Natural killer cell (primary cell): ENCODE measurements at regions of chr3 and their contacts with region 1.

Region 1: DNA sequence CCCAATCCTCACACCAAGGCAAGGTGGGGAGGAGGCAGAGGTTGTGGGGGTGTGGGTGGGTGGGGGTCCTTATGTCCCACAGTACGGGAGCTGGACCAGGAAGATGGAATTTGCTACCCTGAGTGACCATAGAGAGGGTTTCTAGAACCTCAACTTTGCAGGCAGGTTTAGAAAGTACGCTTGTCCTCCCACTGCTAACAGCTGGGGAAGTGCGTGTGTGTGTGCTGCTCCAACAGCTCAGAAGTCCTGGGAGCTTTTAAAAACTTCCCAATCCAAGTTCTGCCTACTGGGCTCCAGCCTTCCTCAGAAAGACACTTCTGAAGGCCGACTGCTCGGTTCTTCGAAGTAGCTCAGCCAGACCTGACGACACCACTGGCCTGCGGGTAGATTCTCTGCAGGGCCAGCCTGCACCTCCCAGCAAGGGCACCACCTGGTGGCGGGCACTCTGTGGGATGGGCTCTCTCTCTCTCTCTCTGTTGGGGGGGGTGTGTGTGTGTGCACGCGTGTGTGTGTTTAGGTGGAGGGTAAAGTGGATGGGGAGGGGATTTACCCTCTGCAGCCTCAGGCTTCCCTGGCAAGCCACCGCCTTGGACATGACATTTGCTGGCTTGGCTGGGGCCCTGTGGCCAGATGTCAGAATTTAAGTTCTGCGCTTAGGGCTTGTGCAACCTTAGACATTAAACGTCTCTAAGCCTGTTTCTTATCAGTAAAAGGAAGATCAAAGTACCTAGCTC is 15.6 kb downstream of the TMEM158 start:
- DNase-seq: peak; percentile 69 to 88
- ATAC-seq: peak; percentile 86 to 99 (median 98)
- H3K4me3 ChIP-seq: no peak overlapping the region
- H3K4me3 Mint-ChIP-seq: no peak overlapping the region
- H3K27ac ChIP-seq: no peak overlapping the region
- H3K27ac Mint-ChIP-seq: no peak overlapping the region
- H3K4me1 ChIP-seq: peaks cover 3% of the 10 kb centered on the region
- H3K4me1 Mint-ChIP-seq: peaks cover 6% of the 10 kb centered on the region in 2 donors
- H3K27me3 ChIP-seq: no peaks in the 10 kb centered on the region
- H3K27me3 Mint-ChIP-seq: peaks cover 9 to 21% of the 10 kb centered on the region in 2 donors
- CTCF ChIP-seq: peak; percentile 75

Region 2: GRCh38 chr3:44529927-44530326 is 680.5 kb before region 1 on chr3:
- intact Hi-C with region 1: loop called (anchors 5 kb)
- DNase-seq: peak in 1 of 2 donors; percentile 30
- ATAC-seq: no peak
- H3K4me3 ChIP-seq: no peak overlapping the region
- H3K4me3 Mint-ChIP-seq: no peak overlapping the region
- H3K27ac ChIP-seq: no peak overlapping the region
- H3K27ac Mint-ChIP-seq: no peak overlapping the region
- H3K4me1 ChIP-seq: no peaks in the 10 kb centered on the region
- H3K4me1 Mint-ChIP-seq: peaks cover 0 to 5% of the 10 kb centered on the region in 2 donors
- H3K27me3 ChIP-seq: peaks cover 2% of the 10 kb centered on the region
- H3K27me3 Mint-ChIP-seq: peaks cover 13 to 22% of the 10 kb centered on the region in 2 donors
- CTCF ChIP-seq: no peak

Region 3: DNA sequence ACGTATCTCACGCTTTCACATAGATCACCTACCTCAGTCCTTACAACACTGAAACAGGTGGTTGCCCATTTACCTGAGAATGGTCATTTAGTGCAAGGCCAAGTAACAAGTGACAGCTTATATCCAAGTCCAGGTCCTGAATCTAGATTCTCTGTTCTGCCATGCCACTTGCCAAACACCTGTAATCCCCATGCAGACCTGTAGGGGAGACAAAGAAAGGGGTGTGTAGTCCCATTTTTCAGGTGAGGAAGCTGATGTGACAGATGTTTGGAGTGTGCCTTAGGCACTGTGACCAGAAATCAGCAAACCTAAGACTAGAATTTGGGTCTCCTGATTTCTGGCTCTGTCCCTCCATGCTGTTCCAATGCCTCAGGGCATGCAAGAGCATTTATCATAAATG is 549.3 kb before region 1 on chr3:
- intact Hi-C with region 1: no loop called
- DNase-seq: no peak
- ATAC-seq: no peak
- H3K4me3 ChIP-seq: no peak overlapping the region
- H3K4me3 Mint-ChIP-seq: no peak overlapping the region
- H3K27ac ChIP-seq: no peak overlapping the region
- H3K27ac Mint-ChIP-seq: no peak overlapping the region
- H3K4me1 ChIP-seq: no peaks in the 10 kb centered on the region
- H3K4me1 Mint-ChIP-seq: no peaks in the 10 kb centered on the region
- H3K27me3 ChIP-seq: no peaks in the 10 kb centered on the region
- H3K27me3 Mint-ChIP-seq: no peaks in the 10 kb centered on the region
- CTCF ChIP-seq: no peak

Region 4: GRCh38 chr3:45037734-45038455 is 172.6 kb before region 1 on chr3:
- intact Hi-C with region 1: loop called (anchors 1 kb)
- DNase-seq: peak; percentile 78 to 97
- ATAC-seq: peak; percentile 90 to 93 (median 91)
- H3K4me3 ChIP-seq: no peak overlapping the region
- H3K4me3 Mint-ChIP-seq: peak overlapping the region; percentile 70
- H3K27ac ChIP-seq: no peak overlapping the region
- H3K27ac Mint-ChIP-seq: no peak overlapping the region
- H3K4me1 ChIP-seq: peaks cover 48% of the 10 kb centered on the region
- H3K4me1 Mint-ChIP-seq: peaks cover 44 to 57% of the 10 kb centered on the region in 2 donors
- H3K27me3 ChIP-seq: peaks cover 10% of the 10 kb centered on the region
- H3K27me3 Mint-ChIP-seq: peaks cover 3 to 22% of the 10 kb centered on the region in 2 donors
- CTCF ChIP-seq: peak; percentile 90

Region 5: DNA sequence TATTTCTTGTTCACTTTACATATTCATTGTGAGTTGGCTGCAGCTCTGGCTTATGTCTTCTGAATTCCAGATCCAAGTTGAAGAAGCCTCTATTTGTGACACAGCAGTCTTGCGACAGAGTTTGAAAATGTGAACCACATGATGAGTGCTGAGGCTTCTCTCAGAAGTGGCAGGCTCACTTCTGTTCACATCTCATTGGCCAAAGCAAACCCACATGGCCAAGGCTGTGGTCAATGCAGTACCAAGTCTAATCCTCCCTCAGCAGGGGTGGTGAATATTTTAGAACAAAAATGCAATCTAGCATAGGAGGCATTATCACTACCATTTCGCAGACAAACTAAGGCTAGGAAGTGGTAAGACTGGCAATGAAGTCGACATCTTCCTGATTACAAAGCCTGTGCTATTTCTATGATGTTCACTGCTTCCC is 109.5 kb before region 1 on chr3:
- intact Hi-C with region 1: no loop called
- DNase-seq: no peak
- ATAC-seq: peak; percentile 60 to 74 (median 68)
- H3K4me3 ChIP-seq: no peak overlapping the region
- H3K4me3 Mint-ChIP-seq: no peak overlapping the region
- H3K27ac ChIP-seq: no peak overlapping the region
- H3K27ac Mint-ChIP-seq: no peak overlapping the region
- H3K4me1 ChIP-seq: peaks cover 28% of the 10 kb centered on the region
- H3K4me1 Mint-ChIP-seq: peaks cover 37 to 47% of the 10 kb centered on the region in 2 donors
- H3K27me3 ChIP-seq: peaks cover 26% of the 10 kb centered on the region
- H3K27me3 Mint-ChIP-seq: peaks cover 28 to 55% of the 10 kb centered on the region in 2 donors
- CTCF ChIP-seq: no peak